Activated T-helper 2 cell treated with anti-CD3 and anti-CD28 coated beads, Interferon-gamma antibody, Interleukin-2, Interleukin-4, amounts not matched to agents 10 μg/mL and 5 μg/mL and 100 μg/mL, durations not matched to agents 14 hours and 24 hours and 36 hours (primary cell): ENCODE measurements at regions of chr6 and their contacts with region 1.

Region 1: GRCh38 chr6:129490521-129491245 is 219.3 kb downstream of the ARHGAP18 start:
- DNase-seq: peak; percentile 61
- H3K4me3 Mint-ChIP-seq: peak overlapping the region; percentile 73
- H3K27ac Mint-ChIP-seq: peak overlapping the region; percentile 95
- H3K4me1 Mint-ChIP-seq: peaks cover 67% of the 10 kb centered on the region
- H3K27me3 Mint-ChIP-seq: no peaks in the 10 kb centered on the region

Region 2: GRCh38 chr6:129448965-129449364 is 41.7 kb before region 1 on chr6:
- intact Hi-C with region 1: loop called (anchors 1 kb)
- DNase-seq: no peak
- H3K4me3 Mint-ChIP-seq: no peak overlapping the region
- H3K27ac Mint-ChIP-seq: no peak overlapping the region
- H3K4me1 Mint-ChIP-seq: peaks cover 57% of the 10 kb centered on the region
- H3K27me3 Mint-ChIP-seq: no peaks in the 10 kb centered on the region

Region 3: GRCh38 chr6:129606664-129607063 is 116.0 kb after region 1 on chr6:
- intact Hi-C with region 1: loop called (anchors 1 kb)
- DNase-seq: no peak
- H3K4me3 Mint-ChIP-seq: no peak overlapping the region
- H3K27ac Mint-ChIP-seq: no peak overlapping the region
- H3K4me1 Mint-ChIP-seq: peaks cover 21% of the 10 kb centered on the region
- H3K27me3 Mint-ChIP-seq: no peaks in the 10 kb centered on the region

Region 4: GRCh38 chr6:129766959-129767728 is 276.5 kb after region 1 on chr6:
- intact Hi-C with region 1: loop called (anchors 5 kb)
- DNase-seq: peak; percentile 68
- H3K4me3 Mint-ChIP-seq: peak overlapping the region; percentile 81
- H3K27ac Mint-ChIP-seq: no peak overlapping the region
- H3K4me1 Mint-ChIP-seq: peaks cover 27% of the 10 kb centered on the region
- H3K27me3 Mint-ChIP-seq: peaks cover 64% of the 10 kb centered on the region

Region 5: DNA sequence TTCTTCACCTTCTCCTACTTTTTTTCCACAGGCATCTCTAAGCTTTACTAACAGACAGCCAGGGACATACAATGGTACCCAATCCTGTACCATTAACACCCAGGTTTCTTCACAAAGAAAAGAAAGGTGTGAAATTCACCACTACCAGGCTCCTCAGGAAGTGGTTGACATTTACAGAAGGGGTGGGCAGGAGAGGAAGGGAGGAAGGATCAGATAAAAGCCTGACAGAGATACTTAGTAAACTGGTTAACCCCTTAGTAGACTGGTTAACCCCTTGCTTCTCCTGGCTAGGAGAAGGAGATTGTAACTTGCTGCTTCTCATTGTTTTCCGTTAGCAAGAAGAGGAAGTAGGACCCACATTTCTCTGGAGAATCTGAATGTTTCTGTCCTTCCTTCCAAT is 724.8 kb after region 1 on chr6:
- intact Hi-C with region 1: loop called (anchors 2 kb)
- DNase-seq: peak; percentile 31
- H3K4me3 Mint-ChIP-seq: peak overlapping the region; percentile 52
- H3K27ac Mint-ChIP-seq: peak overlapping the region; percentile 68
- H3K4me1 Mint-ChIP-seq: peaks cover 44% of the 10 kb centered on the region
- H3K27me3 Mint-ChIP-seq: no peaks in the 10 kb centered on the region